AG04450 (cell line): ENCODE measurements at regions of chr3 and their contacts with region 1.

Region 1: GRCh38 chr3:40309418-40309924 is at the start of gene EIF1B:
- DNase-seq: peak; percentile 93
- H3K4me3 ChIP-seq: peak within 1 kb of the TSS; percentile 84
- H3K27ac ChIP-seq: peak within 1 kb of the TSS; percentile 92
- H3K27me3 ChIP-seq: no peaks in the 10 kb centered on the region
- CTCF ChIP-seq: peak; percentile 93
- polyA plus RNA-seq, gene EIF1B: 35.9 and 46.7 TPM in 2 replicates

Region 2: DNA sequence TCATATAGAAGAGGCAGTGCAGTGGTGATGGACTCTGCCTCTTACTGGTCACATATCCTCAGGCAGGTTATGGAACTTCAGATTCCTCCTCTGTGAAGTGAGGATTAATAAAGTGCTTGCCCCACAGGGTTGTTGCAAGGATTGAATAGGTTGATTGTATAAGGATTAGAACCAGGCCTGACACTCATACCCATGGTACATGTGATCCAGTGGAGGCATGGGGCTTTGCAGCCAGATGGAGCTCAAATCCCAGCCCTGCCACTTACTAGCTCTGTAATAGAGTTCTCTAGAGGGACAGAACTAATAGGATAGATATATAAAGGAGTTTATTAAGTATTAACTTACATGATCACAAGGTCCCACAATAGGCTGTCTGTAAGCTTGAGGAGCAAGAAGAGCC is 184.6 kb before region 1 on chr3:
- CTCF ChIA-PET with region 1: no interaction called
- POLR2A ChIA-PET with region 1: no interaction called
- DNase-seq: no peak
- H3K4me3 ChIP-seq: no peak overlapping the region
- H3K27ac ChIP-seq: no peak overlapping the region
- H3K27me3 ChIP-seq: no peaks in the 10 kb centered on the region
- CTCF ChIP-seq: no peak

Region 3: GRCh38 chr3:40292637-40293349 is 16.7 kb before region 1 on chr3:
- CTCF ChIA-PET with region 1: interaction called, 44 read pairs
- POLR2A ChIA-PET with region 1: no interaction called
- DNase-seq: no peak
- H3K4me3 ChIP-seq: no peak overlapping the region
- H3K27ac ChIP-seq: no peak overlapping the region
- H3K27me3 ChIP-seq: no peaks in the 10 kb centered on the region
- CTCF ChIP-seq: no peak